Activated B cell treated with CpG ODN at 0.5 μM for 24 hours (primary cell): ENCODE measurements at regions of chr4 and their contacts with region 1.

Region 1: DNA sequence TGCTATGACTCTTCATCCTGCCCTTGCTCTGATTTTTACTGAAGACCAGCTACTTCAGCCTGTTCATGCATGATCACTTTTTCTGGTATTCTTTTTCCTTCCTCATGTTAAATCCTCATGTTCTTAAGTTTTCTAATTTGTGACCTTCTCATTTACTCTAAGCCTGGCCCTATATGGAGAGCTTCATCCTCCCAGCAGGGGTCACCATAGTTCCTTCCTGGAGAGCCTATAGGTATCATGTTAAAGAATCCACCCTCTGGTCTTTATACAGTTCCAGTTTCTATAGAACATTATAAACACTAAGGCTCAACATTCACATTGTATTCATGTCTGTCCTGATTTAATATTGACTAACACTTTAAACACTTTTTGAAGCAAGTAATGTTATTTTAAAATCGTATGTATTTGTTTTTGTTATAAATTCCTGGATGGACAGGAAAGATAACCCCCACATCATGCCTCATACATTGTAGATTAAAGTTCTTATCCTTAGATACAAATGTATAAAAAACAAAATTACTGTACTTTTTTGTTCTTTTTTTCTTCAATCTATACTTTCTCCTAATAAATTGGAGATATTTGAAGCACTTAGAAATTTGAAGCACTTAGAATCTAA is 53.8 kb upstream of the OTUD4 start:
- DNase-seq: no peak
- ATAC-seq: peak; percentile 67
- H3K4me3 Mint-ChIP-seq: no peak overlapping the region
- H3K27ac Mint-ChIP-seq: no peak overlapping the region
- H3K4me1 Mint-ChIP-seq: no peaks in the 10 kb centered on the region
- H3K27me3 Mint-ChIP-seq: no peaks in the 10 kb centered on the region
- CTCF ChIP-seq: no peak

Region 2: GRCh38 chr4:144342949-144343760 is 891.0 kb before region 1 on chr4:
- CTCF ChIA-PET with region 1: no interaction called
- POLR2A ChIA-PET with region 1: no interaction called
- intact Hi-C with region 1: no loop called
- DNase-seq: no peak
- ATAC-seq: no peak
- H3K4me3 Mint-ChIP-seq: no peak overlapping the region
- H3K27ac Mint-ChIP-seq: no peak overlapping the region
- H3K4me1 Mint-ChIP-seq: no peaks in the 10 kb centered on the region
- H3K27me3 Mint-ChIP-seq: no peaks in the 10 kb centered on the region
- CTCF ChIP-seq: no peak

Region 3: GRCh38 chr4:145097821-145098674 is 136.2 kb before region 1 on chr4 and contains the starts of genes ABCE1 and ANAPC10:
- CTCF ChIA-PET with region 1: no interaction called
- POLR2A ChIA-PET with region 1: no interaction called
- intact Hi-C with region 1: no loop called
- DNase-seq: peak; percentile 87
- ATAC-seq: peak; percentile 89
- H3K4me3 Mint-ChIP-seq: peak within 1 kb of the TSS; percentile 94
- H3K27ac Mint-ChIP-seq: peak within 1 kb of the TSS; percentile 96
- H3K4me1 Mint-ChIP-seq: peaks cover 51% of the 10 kb centered on the region
- H3K27me3 Mint-ChIP-seq: no peaks in the 10 kb centered on the region
- CTCF ChIP-seq: no peak
- total RNA-seq, gene ABCE1: 75.5 and 81.6 TPM in 2 replicates
- total RNA-seq, gene ANAPC10: 18.2 and 21.8 TPM in 2 replicates

Region 4: DNA sequence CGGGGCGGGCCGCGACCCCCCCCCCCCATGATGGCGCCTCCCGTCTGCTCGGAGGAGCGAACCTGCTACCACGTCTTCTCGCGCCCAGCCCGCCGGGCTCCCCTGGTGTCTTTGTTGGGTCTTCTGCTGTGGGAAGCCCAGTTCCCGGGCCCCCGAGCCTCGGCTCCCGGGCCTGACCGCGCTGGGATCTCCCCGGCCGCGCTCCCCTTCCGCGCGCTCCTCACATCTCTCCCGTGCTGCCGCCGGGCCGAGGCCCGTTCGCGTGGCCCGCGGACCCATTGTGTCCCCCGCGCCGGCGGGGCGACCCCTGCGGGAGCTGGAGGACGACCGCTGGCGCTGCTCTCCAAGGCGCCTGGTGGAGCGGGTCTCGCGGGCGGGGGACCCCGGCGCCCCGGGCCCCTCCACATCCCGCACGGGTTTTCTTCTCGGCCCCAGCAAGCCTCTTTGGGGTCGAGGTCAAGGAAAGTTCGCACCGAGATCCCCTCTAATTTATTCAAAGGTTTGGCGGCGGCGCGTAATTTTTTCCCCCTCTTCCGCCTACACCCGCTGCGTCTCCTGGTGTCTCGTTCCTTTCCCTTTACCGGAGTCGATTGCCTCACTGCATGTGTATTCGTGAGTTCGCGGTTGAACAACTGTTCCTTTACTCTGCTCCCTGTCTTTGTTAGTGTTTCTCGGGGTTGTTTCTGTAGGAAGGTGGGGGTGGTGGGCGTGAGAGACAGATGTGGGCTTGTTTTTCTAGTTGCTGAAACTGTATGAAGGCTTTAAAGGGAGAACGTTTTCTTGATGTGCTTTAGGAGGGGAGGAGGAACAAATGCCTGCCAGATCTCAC is 248.2 kb after region 1 on chr4:
- CTCF ChIA-PET with region 1: no interaction called
- POLR2A ChIA-PET with region 1: no interaction called
- intact Hi-C with region 1: no loop called
- DNase-seq: peak; percentile 18
- ATAC-seq: no peak
- H3K4me3 Mint-ChIP-seq: no peak overlapping the region
- H3K27ac Mint-ChIP-seq: no peak overlapping the region
- H3K4me1 Mint-ChIP-seq: peaks cover 13% of the 10 kb centered on the region
- H3K27me3 Mint-ChIP-seq: peaks cover 44% of the 10 kb centered on the region
- CTCF ChIP-seq: no peak

Region 5: GRCh38 chr4:145609481-145610427 is 375.6 kb after region 1 on chr4:
- CTCF ChIA-PET with region 1: interaction called, 6 read pairs
- POLR2A ChIA-PET with region 1: no interaction called
- intact Hi-C with region 1: loop called (anchors 1 kb)
- DNase-seq: no peak
- ATAC-seq: peak; percentile 65
- H3K4me3 Mint-ChIP-seq: no peak overlapping the region
- H3K27ac Mint-ChIP-seq: no peak overlapping the region
- H3K4me1 Mint-ChIP-seq: no peaks in the 10 kb centered on the region
- H3K27me3 Mint-ChIP-seq: peaks cover 8% of the 10 kb centered on the region
- CTCF ChIP-seq: no peak

Region 6: DNA sequence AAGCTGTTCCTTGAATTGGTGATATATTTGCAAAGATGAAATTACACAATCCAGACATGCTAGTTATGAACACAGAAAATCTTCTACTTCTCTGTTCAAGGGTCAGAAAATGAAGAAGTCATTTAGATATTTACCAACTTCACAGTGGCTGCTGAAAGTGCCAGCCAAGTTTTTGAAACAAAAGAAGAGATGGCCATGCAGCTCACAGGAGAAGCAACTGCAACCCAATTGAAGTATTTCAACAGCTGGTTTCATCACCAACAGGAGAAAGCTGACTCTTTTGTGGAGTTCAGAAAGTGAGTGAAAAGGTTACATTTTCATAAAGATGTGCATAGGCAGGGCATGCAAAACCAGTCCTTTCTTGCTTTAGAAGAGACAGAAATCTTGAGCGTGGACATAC is 871.3 kb after region 1 on chr4:
- CTCF ChIA-PET with region 1: no interaction called
- POLR2A ChIA-PET with region 1: no interaction called
- intact Hi-C with region 1: no loop called
- DNase-seq: no peak
- ATAC-seq: no peak
- H3K4me3 Mint-ChIP-seq: no peak overlapping the region
- H3K27ac Mint-ChIP-seq: no peak overlapping the region
- H3K4me1 Mint-ChIP-seq: peaks cover 9% of the 10 kb centered on the region
- H3K27me3 Mint-ChIP-seq: no peaks in the 10 kb centered on the region
- CTCF ChIP-seq: no peak